ENCODE measurements at regions of chr18 and their contacts with region 1.

Region 1: DNA sequence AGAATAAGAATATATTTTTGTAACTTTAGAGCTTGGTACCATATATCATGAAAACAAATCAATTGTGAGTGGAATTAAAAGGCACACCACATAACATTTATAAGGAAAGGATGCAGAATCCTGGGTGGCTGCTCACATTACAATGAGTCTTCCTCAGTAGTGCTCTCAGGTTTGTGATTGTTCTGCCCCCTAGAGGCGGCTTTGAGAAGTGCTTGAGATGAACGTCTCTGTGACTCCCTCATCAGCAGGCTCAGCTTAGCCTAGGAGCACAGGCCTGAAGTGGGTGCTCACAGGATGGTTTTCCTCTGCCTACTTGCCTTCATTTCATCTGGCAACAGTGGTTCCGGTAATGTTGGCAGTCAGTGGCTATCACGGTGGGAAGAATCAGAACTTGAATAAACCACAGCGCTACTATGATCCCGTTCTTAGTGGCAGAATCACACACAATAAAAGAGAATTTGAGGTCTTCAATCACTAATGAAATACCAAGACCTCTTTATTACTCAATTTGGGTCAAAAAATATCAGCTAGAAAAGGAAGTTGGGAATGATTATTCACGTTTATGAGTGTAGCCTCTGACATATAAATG is 38.1 kb upstream of the B4GALT6 start:
- DNase-seq: peak; percentile 72
- H3K4me3 ChIP-seq: no peak overlapping the region
- H3K27ac ChIP-seq: no peak overlapping the region
- H3K4me1 ChIP-seq: peaks cover 4% of the 10 kb centered on the region
- H3K27me3 ChIP-seq: no peaks in the 10 kb centered on the region
- CTCF ChIP-seq: peak; percentile 86 to 90

Region 2: DNA sequence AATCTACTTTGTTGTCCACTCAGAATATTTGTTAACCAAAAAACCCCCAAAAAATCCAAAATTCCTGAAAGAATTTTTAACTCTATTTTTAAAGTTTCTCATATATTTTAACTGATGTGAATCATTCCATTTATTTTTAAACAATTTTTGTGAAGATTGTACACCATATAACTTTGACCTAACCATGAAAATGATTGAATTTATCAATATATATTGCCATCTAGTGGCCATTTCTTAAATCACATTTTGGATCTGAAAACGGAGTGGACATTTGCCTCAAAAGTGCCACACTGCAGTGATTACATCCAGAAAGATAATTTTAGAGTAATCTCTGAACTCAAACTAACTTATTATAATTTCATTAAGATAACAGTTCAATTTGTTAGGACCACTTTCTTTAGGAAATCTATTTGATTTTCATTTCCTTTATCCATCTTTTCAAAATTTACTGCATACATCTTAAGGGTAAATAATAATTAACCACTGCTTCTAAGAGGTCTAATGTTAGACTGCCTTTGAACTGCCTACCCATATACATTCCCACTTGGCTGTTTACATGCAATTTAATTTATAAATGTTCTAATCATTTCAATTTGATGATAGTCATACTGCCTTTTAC is 751.0 kb before region 1 on chr18:
- CTCF ChIA-PET with region 1: no interaction called
- dilution Hi-C with region 1: no loop called
- in situ Hi-C with region 1: no loop called
- intact Hi-C with region 1: loop called (anchors 5 kb)
- DNase-seq: no peak
- H3K4me3 ChIP-seq: no peak overlapping the region
- H3K27ac ChIP-seq: no peak overlapping the region
- H3K4me1 ChIP-seq: peaks cover 4% of the 10 kb centered on the region
- H3K27me3 ChIP-seq: no peaks in the 10 kb centered on the region
- CTCF ChIP-seq: peak; percentile 47 to 63

Region 3: DNA sequence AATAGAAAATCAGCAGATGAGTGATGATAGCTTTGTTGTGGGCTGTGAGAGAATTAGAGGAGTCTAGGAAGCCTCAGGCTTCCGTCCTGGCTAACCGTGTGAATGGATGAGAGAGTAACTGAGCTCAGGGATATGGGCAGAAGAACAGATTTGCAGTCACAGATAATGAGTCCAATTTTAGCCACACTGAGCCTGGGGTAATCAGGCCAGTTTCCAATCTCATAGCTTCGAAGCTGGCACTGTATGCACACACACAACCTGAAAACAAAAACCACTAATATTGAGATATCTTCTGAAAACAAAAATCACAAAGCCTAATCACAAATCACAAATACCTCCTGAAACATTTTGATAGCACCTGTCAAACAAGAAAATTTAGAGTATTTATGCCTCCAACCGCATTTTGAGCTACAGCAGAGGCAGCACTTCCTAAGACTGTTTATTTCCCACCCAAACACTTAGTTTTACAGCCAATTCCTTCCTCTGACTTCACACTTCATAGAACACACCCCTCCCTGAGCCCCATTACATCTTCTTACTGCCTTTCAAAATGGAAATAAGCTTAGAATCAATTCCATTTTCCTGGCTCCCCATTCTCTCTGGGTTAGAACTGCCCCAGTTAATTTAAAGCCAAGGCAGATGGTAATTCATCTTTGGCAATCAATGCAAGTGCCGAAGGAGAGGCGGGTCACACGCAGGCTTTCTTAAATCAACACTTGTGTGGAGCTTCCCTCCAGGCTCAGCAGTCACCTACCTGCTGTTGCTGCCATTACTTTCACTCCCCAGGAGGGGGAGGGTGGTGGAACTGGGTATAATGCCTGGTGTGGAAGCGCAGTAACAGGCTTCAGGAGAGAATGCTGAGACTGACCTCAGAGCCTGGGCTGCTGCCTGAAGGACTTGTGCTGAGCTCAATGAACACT is 111.9 kb before region 1 on chr18:
- CTCF ChIA-PET with region 1: no interaction called
- dilution Hi-C with region 1: no loop called
- in situ Hi-C with region 1: no loop called
- intact Hi-C with region 1: loop called (anchors 2 kb)
- DNase-seq: no peak
- H3K4me3 ChIP-seq: no peak overlapping the region
- H3K27ac ChIP-seq: no peak overlapping the region
- H3K4me1 ChIP-seq: no peaks in the 10 kb centered on the region
- H3K27me3 ChIP-seq: no peaks in the 10 kb centered on the region
- CTCF ChIP-seq: peak; percentile 4 to 26

Region 4: DNA sequence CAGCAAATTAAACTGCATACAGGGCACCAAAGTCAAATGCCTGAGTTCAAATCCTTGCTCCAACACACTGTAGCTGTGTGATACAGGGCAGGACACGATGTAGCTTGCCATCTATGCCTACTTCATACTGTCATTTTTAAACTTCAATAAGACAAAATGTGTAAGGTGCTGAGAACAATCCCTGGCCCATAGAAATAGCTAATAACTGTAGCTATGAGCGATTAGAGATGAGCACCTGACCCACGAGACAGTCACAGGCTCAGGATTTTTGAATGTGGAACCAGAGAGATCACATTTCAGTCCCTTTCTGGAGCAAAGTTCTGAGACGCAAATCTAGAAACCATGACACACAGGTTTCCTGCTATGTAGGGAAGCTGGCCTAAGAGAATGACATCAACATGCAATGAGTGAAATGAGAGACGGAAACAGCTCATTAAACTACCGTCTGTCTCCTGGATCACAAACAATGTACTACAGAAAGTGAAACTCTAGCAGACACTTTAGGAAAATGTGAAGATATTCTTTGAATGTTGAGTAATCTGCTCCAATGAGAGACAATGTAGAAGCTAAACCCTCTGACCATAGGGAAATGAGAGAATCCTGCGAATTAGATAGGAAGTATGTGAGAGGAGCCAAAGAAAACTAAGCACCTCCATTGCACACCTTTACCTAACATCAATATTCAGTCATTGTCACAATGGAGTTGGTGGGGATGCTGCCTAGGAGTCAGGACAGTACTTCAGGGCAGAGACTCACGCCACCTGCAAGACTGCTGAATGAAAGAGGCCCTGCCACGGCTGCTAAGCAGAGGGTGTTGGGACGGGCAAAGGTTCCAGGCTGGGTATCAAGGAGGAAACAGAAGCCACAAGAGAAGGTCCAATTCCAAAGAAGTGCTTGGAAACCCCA is 63.5 kb before region 1 on chr18:
- CTCF ChIA-PET with region 1: no interaction called
- dilution Hi-C with region 1: no loop called
- in situ Hi-C with region 1: no loop called
- intact Hi-C with region 1: no loop called
- DNase-seq: no peak
- H3K4me3 ChIP-seq: no peak overlapping the region
- H3K27ac ChIP-seq: no peak overlapping the region
- H3K4me1 ChIP-seq: no peaks in the 10 kb centered on the region
- H3K27me3 ChIP-seq: no peaks in the 10 kb centered on the region
- CTCF ChIP-seq: no peak

Region 5: GRCh38 chr18:31679133-31679731 is 43.2 kb before region 1 on chr18:
- CTCF ChIA-PET with region 1: no interaction called
- dilution Hi-C with region 1: loop called (anchors 5 kb)
- in situ Hi-C with region 1: no loop called
- intact Hi-C with region 1: loop called (anchors 2 kb)
- DNase-seq: peak; percentile 85
- H3K4me3 ChIP-seq: peak overlapping the region in 1 of 3 experiments; percentile 5
- H3K27ac ChIP-seq: peak overlapping the region; percentile 84
- H3K4me1 ChIP-seq: peaks cover 39% of the 10 kb centered on the region
- H3K27me3 ChIP-seq: no peaks in the 10 kb centered on the region
- CTCF ChIP-seq: no peak

Region 6: GRCh38 chr18:31685097-31686082 is 37.1 kb before region 1 on chr18:
- CTCF ChIA-PET with region 1: no interaction called
- dilution Hi-C with region 1: no loop called
- in situ Hi-C with region 1: no loop called
- intact Hi-C with region 1: loop called (anchors 2 kb)
- DNase-seq: peak; percentile 81
- H3K4me3 ChIP-seq: peak overlapping the region; percentile 23 to 80 (median 68)
- H3K27ac ChIP-seq: no peak overlapping the region
- H3K4me1 ChIP-seq: peaks cover 29% of the 10 kb centered on the region
- H3K27me3 ChIP-seq: no peaks in the 10 kb centered on the region
- CTCF ChIP-seq: peak; percentile 29 to 44

Measured in mammary epithelial cell (primary cell).